Caco-2 (cell line): ENCODE measurements at regions of chr10 and their contacts with region 1.

Region 1: DNA sequence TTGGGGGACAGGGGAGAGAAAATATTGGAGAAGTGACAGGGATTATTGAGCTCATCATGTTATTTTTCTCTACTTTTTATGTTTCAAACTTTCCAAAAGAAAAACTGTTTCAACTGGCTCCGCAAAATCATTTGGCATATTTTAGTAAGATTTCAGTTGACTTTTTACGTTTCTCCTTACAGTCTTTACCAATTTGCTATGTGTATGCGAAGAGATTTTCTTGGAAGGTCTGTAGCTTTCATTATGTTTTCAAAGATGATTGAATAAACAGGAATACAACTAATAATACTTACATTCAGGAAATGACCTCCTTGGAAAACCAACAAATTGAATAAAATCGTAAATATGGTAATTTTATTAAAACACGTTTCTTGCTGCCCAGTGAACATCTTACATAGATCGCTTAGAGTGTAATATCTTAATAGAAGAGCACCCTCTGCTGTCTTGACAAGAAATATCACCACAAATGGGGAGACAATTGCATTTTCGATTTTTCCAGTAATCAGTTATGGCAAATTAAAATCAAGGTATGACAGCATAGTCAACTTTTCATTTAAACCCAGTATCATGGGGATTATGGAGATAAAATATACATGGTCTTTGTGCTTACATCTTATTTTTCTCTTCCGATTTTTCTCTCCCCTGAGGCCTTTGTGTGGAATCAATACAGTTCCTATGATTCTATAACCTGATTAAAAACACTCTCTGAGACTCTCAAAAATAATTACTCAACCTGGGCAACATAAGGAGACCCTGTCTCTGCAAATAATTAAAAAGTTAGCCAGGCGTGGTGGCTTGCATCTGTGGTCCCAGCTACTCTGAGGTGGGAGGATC is 43.1 kb downstream of the MBL2 start:
- DNase-seq: peak in 1 of 2 experiments; percentile 49
- H3K4me3 ChIP-seq: no peak overlapping the region
- H3K4me3 Mint-ChIP-seq: no peak overlapping the region
- H3K27ac Mint-ChIP-seq: no peak overlapping the region
- H3K4me1 ChIP-seq: peaks cover 8% of the 10 kb centered on the region; the same call in 1 of the 2 replicates
- H3K4me1 Mint-ChIP-seq: no peaks in the 10 kb centered on the region
- H3K27me3 ChIP-seq: no peaks in the 10 kb centered on the region
- H3K27me3 Mint-ChIP-seq: peaks cover 3% of the 10 kb centered on the region
- CTCF ChIP-seq: peak; percentile 73 to 89

Region 2: GRCh38 chr10:51926337-51926736 is 803.2 kb before region 1 on chr10:
- CTCF ChIA-PET with region 1: no interaction called
- POLR2A ChIA-PET with region 1: no interaction called
- intact Hi-C with region 1: no loop called
- DNase-seq: no peak
- H3K4me3 ChIP-seq: no peak overlapping the region
- H3K4me3 Mint-ChIP-seq: no peak overlapping the region
- H3K27ac Mint-ChIP-seq: no peak overlapping the region
- H3K4me1 ChIP-seq: no peaks in the 10 kb centered on the region
- H3K4me1 Mint-ChIP-seq: no peaks in the 10 kb centered on the region
- H3K27me3 ChIP-seq: no peaks in the 10 kb centered on the region
- H3K27me3 Mint-ChIP-seq: no peaks in the 10 kb centered on the region
- CTCF ChIP-seq: no peak

Region 3: GRCh38 chr10:52682784-52683183 is 46.7 kb before region 1 on chr10:
- CTCF ChIA-PET with region 1: no interaction called
- POLR2A ChIA-PET with region 1: no interaction called
- intact Hi-C with region 1: loop called (anchors 1 kb)
- DNase-seq: peak; percentile 52 to 76
- H3K4me3 ChIP-seq: no peak overlapping the region
- H3K4me3 Mint-ChIP-seq: peak overlapping the region; percentile 6
- H3K27ac Mint-ChIP-seq: no peak overlapping the region
- H3K4me1 ChIP-seq: peaks cover 43% of the 10 kb centered on the region
- H3K4me1 Mint-ChIP-seq: peaks cover 29% of the 10 kb centered on the region
- H3K27me3 ChIP-seq: no peaks in the 10 kb centered on the region
- H3K27me3 Mint-ChIP-seq: no peaks in the 10 kb centered on the region
- CTCF ChIP-seq: no peak

Region 4: DNA sequence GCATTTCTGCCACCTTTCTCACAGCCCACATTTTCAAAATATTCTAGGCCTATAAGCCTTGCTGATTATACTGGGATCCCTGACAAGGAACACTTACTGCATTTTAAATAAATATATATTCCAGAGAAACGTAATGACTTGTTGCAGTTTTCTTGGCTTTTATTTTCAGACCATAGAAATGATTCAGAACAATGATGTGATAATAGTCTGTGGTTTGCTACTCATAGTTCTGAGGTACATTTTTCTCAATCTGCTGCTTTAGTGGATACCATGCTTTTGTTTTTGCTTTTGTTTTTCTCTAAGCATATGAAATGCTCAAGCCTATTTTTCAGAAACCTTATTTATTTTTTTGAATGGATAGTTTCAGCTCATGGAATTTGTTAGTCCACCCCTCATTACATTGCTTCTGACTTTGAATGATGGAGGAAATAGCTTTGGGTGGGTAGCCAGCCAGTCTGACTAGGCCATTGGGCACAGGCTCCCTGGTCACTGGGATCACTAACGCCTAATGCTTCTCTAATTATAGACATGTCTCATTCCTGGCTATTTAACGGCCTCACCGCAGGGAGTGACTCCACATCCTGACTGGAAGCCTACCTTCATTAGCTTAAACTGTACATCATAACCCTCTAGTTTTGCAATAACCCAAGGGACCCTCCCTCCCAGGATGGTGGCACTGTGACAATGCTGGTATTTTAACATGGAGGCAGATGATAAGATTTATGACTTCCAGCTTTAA is 23.0 kb before region 1 on chr10:
- CTCF ChIA-PET with region 1: no interaction called
- POLR2A ChIA-PET with region 1: no interaction called
- intact Hi-C with region 1: loop called (anchors 2 kb)
- DNase-seq: no peak
- H3K4me3 ChIP-seq: no peak overlapping the region
- H3K4me3 Mint-ChIP-seq: no peak overlapping the region
- H3K27ac Mint-ChIP-seq: no peak overlapping the region
- H3K4me1 ChIP-seq: no peaks in the 10 kb centered on the region
- H3K4me1 Mint-ChIP-seq: no peaks in the 10 kb centered on the region
- H3K27me3 ChIP-seq: no peaks in the 10 kb centered on the region
- H3K27me3 Mint-ChIP-seq: no peaks in the 10 kb centered on the region
- CTCF ChIP-seq: no peak